HEK293 (cell line): ENCODE measurements at regions of chr6 and their contacts with region 1.

Region 1: DNA sequence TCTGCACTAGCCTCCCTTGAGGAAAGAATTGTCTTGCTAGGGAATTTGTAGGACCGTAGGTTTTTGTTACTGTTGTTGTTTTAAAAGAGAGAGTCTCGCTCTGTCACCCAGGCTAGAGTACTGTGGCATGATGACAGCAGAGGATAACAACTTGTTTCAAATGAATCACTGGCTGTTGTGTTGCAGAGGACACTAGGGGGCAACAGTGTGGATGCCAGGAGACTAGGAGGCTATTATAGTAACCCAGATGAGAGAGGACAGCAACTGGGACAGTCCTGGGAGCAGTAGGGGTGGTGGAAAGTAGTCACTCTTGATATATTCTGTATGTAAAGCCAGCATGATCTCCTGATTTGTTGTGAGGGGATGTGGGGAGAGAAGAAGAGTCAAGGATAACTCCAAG is 41.8 kb upstream of the LAMA4 start:
- H3K4me3 ChIP-seq: no peak overlapping the region
- H3K27ac ChIP-seq: no peak overlapping the region
- H3K4me1 ChIP-seq: peaks cover 7% of the 10 kb centered on the region; the same call in 1 of the 2 replicates
- CTCF ChIP-seq: peak; percentile 61; the same call in 1 of the 2 replicates

Region 2: DNA sequence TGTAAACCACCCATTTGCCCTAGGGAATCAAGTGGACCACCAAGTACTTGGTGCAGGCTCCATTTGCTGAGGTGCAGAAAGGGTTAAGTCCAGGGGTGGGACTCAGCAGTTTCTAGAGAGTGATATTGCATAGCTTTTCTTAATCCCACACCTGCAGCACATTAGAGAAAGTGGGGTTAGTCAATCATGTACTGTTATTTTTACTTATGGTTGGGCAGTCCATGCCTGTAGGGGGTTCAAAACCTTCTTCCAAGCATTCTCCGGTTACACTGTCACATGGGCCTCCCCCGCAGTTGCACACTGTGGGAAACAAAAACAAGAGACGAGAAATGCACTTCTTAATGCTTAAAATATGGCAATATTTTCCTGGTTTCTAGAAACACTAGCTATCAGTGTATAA is 107.2 kb before region 1 on chr6:
- CTCF ChIA-PET with region 1: interaction called, 10 read pairs
- POLR2A ChIA-PET with region 1: no interaction called
- H3K4me3 ChIP-seq: no peak overlapping the region
- H3K27ac ChIP-seq: peak overlapping the region; percentile 60
- H3K4me1 ChIP-seq: peaks cover 16% of the 10 kb centered on the region
- CTCF ChIP-seq: no peak

Region 3: GRCh38 chr6:112269114-112269513 is 27.0 kb before region 1 on chr6:
- CTCF ChIA-PET with region 1: interaction called, 10 read pairs
- POLR2A ChIA-PET with region 1: no interaction called
- H3K4me3 ChIP-seq: no peak overlapping the region
- H3K27ac ChIP-seq: no peak overlapping the region
- H3K4me1 ChIP-seq: no peaks in the 10 kb centered on the region
- CTCF ChIP-seq: peak; percentile 33; the same call in 1 of the 2 replicates

Region 4: GRCh38 chr6:112282221-112282620 is 13.9 kb before region 1 on chr6:
- CTCF ChIA-PET with region 1: interaction called, 19 read pairs
- POLR2A ChIA-PET with region 1: no interaction called
- H3K4me3 ChIP-seq: no peak overlapping the region
- H3K27ac ChIP-seq: no peak overlapping the region
- H3K4me1 ChIP-seq: peaks cover 9% of the 10 kb centered on the region
- CTCF ChIP-seq: peak; percentile 68; the same call in 1 of the 2 replicates

Region 5: GRCh38 chr6:112311950-112312547 is 15.9 kb after region 1 on chr6:
- CTCF ChIA-PET with region 1: interaction called, 70 read pairs
- POLR2A ChIA-PET with region 1: interaction called, 4 read pairs
- H3K4me3 ChIP-seq: no peak overlapping the region
- H3K27ac ChIP-seq: no peak overlapping the region
- H3K4me1 ChIP-seq: no peaks in the 10 kb centered on the region
- CTCF ChIP-seq: 0 out of 2 replicates have a peak, but pooled peaks have one; percentile 10